IMR-90 (cell line): ENCODE measurements at regions of chrX and their contacts with region 1.

Region 1: DNA sequence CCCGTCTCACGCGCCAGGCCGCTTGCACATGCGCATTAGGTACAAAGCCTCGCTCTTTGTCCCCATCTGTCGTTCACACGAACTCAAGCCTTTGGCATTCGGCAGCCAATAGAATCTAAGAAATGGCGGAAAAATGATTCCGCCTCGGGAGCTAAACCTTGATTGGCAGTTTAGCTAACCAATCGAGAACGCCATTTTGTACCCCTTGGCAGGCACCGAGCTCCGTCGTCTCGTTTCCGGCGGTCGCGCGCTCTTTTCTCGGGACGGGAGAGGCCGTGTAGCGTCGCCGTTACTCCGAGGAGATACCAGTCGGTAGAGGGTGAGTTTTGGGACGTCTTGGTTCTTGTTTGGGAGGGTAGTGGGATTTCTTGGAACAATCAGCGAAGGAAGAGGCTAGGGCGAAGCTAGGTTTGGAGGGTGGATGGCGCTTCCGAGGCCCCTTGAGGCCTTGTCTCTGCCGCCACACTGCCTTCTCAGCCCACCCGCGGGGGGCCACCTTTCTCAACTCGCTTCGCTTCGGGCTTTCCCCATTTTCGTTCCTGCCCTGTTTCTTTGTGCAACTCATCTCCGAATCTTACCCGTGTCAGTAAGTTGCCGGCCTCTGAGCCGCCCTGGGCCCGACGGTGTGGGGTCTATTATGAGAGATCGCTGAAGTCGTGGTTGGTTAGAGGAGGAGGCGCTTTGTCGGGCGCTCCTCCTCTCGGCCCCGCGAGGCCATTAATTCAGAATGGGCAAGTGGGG is at the start of gene NONO:
- DNase-seq: peak; percentile 99
- ATAC-seq: peak; percentile 84
- H3K4me3 ChIP-seq: peak within 1 kb of the TSS; percentile 90
- H3K27ac ChIP-seq: peak within 1 kb of the TSS; percentile 98
- H3K4me1 ChIP-seq: no peaks in the 10 kb centered on the region
- H3K27me3 ChIP-seq: no peaks in the 10 kb centered on the region
- CTCF ChIP-seq: 0 out of 2 replicates have a peak, but pooled peaks have one; percentile 23
- POLR2A ChIP-seq: peak; percentile 89
- RAD21 ChIP-seq: no peak
- total RNA-seq, gene NONO: 444 and 609 TPM in 2 replicates

Region 2: DNA sequence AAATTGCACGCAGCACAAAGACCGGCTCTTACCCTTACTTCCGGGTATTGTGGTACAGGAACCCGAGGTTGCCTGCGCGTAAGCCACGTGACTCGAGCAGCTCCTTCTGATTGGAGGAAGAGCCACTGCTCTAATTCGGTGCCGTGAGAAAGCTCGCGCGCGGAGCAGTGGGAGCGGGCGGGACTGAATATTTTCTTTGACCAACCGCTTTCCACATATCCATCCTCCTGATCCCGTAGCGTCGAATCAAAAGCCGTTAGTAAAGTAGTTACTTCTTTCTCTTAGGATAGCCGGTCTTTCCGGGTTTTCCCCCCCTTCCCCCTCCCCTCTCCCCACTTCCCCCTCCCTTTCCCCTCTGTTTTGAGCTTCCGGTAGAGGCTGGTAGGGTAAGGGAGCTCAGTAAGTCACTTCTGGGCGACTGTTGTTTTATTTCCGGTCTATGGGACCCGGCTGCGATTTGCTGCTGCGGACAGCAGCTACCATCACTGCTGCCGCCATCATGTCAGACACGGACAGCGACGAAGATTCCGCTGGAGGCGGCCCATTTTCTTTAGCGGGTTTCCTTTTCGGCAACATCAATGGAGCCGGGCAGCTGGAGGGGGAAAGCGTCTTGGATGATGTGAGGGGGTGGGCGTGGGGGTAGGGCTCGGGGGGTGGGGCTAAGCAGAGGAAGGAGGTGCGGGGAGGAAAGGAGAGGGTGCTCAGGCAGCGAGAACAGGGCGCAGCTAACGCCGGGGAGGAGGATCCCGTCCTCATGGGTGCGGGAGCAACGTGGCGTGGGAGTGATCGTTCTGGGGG is 82.5 kb after region 1 on chrX and contains the start of gene TAF1:
- CTCF ChIA-PET with region 1: no interaction called
- POLR2A ChIA-PET with region 1: no interaction called
- dilution Hi-C with region 1: no loop called
- in situ Hi-C with region 1: no loop called
- intact Hi-C with region 1: loop called (anchors 5 kb)
- DNase-seq: peak; percentile 97
- ATAC-seq: peak; percentile 89
- H3K4me3 ChIP-seq: peak within 1 kb of the TSS; percentile 91
- H3K27ac ChIP-seq: peak within 1 kb of the TSS; percentile 95
- H3K4me1 ChIP-seq: no peaks in the 10 kb centered on the region; the same call in 1 of the 2 replicates
- H3K27me3 ChIP-seq: no peaks in the 10 kb centered on the region
- CTCF ChIP-seq: no peak
- POLR2A ChIP-seq: peak; percentile 68; the same call in 1 of the 2 replicates
- RAD21 ChIP-seq: no peak
- total RNA-seq, gene TAF1: 25.5 and 36.1 TPM in 2 replicates